ENCODE measurements at regions of chr6 and their contacts with region 1.

Region 1: DNA sequence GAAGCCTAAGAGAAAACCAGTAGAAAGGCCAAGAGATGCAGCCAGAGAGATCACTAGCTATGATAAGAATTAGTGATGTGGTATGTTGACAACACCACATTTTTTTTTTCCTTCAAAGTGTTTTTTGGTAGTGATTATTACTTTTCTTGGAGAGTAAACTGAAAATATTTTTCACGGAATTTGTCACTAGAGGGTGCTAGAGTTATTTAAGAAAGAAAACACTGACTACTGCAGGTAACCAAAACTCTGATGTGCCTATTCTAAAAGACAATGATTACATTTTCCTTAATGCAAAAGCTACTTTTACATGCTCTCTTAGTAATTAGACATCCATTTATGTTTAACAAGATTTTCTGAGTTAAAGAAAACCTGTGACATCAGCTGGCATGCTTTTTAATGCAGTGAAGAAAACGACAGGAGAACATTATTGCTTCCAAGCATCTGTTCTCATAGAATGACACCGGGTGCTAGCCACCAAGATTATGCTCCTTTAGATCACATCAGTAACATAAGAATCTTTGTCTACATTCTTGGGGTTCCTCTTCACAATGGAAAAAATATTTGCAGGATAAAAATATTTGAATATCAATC is 28.8 kb downstream of the RWDD2A start:
- DNase-seq: peak; percentile 41
- H3K4me3 Mint-ChIP-seq: no peak overlapping the region
- H3K27ac Mint-ChIP-seq: no peak overlapping the region
- H3K4me1 Mint-ChIP-seq: no peaks in the 10 kb centered on the region
- H3K27me3 Mint-ChIP-seq: no peaks in the 10 kb centered on the region
- CTCF ChIP-seq: peak; percentile 39

Region 2: GRCh38 chr6:82430611-82431010 is 791.4 kb before region 1 on chr6:
- CTCF ChIA-PET with region 1: no interaction called
- POLR2A ChIA-PET with region 1: no interaction called
- intact Hi-C with region 1: no loop called
- DNase-seq: no peak
- H3K4me3 Mint-ChIP-seq: no peak overlapping the region
- H3K27ac Mint-ChIP-seq: no peak overlapping the region
- H3K4me1 Mint-ChIP-seq: no peaks in the 10 kb centered on the region
- H3K27me3 Mint-ChIP-seq: no peaks in the 10 kb centered on the region
- CTCF ChIP-seq: no peak

Region 3: DNA sequence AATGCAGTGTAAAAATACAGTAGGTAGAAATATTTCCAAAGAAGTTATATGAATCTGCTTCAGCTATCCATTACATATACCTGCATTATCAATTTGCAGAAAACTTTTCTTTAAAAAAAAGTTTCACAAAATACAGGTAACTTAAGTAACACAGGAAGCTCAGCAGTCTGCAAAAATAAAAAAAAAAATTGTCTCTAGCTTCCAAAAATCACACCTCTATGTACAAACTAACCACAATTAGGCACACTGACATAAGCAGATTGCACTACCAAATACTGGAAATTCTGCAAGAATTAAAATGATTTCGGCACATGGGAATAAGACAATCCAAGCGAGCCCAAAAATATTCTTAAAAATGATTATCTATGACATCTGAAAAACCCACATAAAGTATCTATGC is 167.6 kb after region 1 on chr6:
- CTCF ChIA-PET with region 1: no interaction called
- POLR2A ChIA-PET with region 1: no interaction called
- intact Hi-C with region 1: no loop called
- DNase-seq: no peak
- H3K4me3 Mint-ChIP-seq: no peak overlapping the region
- H3K27ac Mint-ChIP-seq: no peak overlapping the region
- H3K4me1 Mint-ChIP-seq: no peaks in the 10 kb centered on the region
- H3K27me3 Mint-ChIP-seq: no peaks in the 10 kb centered on the region
- CTCF ChIP-seq: no peak

Region 4: GRCh38 chr6:83413068-83413467 is 191.1 kb after region 1 on chr6:
- CTCF ChIA-PET with region 1: interaction called, 50 read pairs
- POLR2A ChIA-PET with region 1: interaction called, 7 read pairs
- intact Hi-C with region 1: loop called (anchors 1 kb)
- DNase-seq: no peak
- H3K4me3 Mint-ChIP-seq: no peak overlapping the region
- H3K27ac Mint-ChIP-seq: no peak overlapping the region
- H3K4me1 Mint-ChIP-seq: no peaks in the 10 kb centered on the region
- H3K27me3 Mint-ChIP-seq: no peaks in the 10 kb centered on the region
- CTCF ChIP-seq: no peak

Region 5: DNA sequence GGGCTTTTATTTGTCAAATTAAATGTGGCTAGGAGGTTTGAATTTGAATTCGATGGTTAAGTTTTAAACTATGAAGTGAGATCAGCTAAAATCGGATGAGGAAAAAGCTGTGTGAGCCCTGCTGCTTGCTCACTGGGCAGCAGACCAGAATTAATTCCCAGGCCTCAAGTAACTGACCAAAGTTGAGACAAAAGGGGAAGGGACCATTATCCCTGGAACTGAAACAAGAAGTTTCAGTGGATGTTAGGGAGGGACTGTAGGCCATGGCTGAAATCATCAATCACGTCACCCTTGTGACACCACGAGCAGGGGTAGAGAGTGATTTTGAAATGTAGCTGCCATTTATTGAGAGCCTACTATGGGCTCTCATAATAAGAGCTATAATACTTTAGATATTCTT is 283.4 kb after region 1 on chr6:
- CTCF ChIA-PET with region 1: interaction called, 397 read pairs
- POLR2A ChIA-PET with region 1: interaction called, 3 read pairs
- intact Hi-C with region 1: no loop called
- DNase-seq: no peak
- H3K4me3 Mint-ChIP-seq: no peak overlapping the region
- H3K27ac Mint-ChIP-seq: no peak overlapping the region
- H3K4me1 Mint-ChIP-seq: no peaks in the 10 kb centered on the region
- H3K27me3 Mint-ChIP-seq: no peaks in the 10 kb centered on the region
- CTCF ChIP-seq: no peak

Region 6: GRCh38 chr6:83592770-83593394 is 370.9 kb after region 1 on chr6:
- CTCF ChIA-PET with region 1: interaction called, 5 read pairs
- POLR2A ChIA-PET with region 1: no interaction called
- intact Hi-C with region 1: loop called (anchors 2 kb)
- DNase-seq: peak; percentile 52
- H3K4me3 Mint-ChIP-seq: no peak overlapping the region
- H3K27ac Mint-ChIP-seq: no peak overlapping the region
- H3K4me1 Mint-ChIP-seq: peaks cover 6% of the 10 kb centered on the region
- H3K27me3 Mint-ChIP-seq: peaks cover 8% of the 10 kb centered on the region
- CTCF ChIP-seq: peak; percentile 48